ENCODE measurements at regions of chr10 and their contacts with region 1.

Region 1: GRCh38 chr10:128095027-128095752 is 31.0 kb downstream of the MKI67 start:
- DNase-seq: no peak
- ATAC-seq: no peak
- H3K4me3 ChIP-seq: no peak overlapping the region
- H3K27ac ChIP-seq: no peak overlapping the region
- H3K4me1 ChIP-seq: no peaks in the 10 kb centered on the region
- H3K27me3 ChIP-seq: peaks cover 0 to 5% (median 0%) of the 10 kb centered on the region in 9 donors
- CTCF ChIP-seq: no peak
- POLR2A ChIP-seq: no peak

Region 2: DNA sequence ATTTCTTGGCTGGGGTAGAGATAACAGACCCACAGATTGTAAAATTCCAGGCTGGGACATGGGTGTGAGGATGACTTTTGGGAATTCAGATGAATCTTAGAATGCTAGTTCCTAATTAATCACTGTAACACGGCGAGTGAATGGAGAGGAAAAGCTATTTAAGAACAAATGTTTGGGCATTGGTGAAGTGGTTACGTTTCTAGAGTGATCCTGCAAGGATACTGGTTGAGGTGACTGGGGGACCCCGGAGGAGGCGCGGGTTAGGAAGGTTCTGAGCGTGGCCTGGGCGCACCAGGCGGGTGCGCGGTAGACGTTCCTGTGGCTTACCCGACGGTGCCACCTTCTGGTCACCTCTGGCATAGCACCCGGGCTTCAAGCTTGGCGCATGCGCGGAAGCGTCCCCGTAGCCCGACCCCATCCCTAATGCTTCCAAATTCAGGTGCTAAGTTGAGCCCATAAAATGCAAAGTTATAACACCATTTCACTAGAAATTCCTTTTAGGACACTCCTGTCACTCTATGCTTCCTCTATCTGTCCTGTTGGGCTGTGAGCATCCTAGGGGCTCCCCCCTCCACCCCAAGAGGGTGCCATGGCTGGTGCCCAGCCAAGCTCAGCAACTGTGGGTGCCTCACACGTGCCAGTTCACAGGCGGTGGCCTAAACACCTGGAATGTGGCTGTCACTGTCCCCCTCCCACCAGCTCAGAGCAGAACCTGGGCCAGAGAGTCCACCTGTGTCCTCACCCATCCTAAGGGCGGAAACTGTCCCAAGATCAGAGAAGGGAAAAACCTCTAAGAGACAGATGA is 83.8 kb before region 1 on chr10:
- intact Hi-C with region 1: no loop called
- DNase-seq: peak; percentile 83 to 93 (median 86)
- ATAC-seq: peak; percentile 73 to 88 (median 86)
- H3K4me3 ChIP-seq: peak overlapping the region in 2 of 12 donors; percentile 1 to 2
- H3K27ac ChIP-seq: peak overlapping the region in 1 of 12 donors; percentile 39
- H3K4me1 ChIP-seq: peaks cover 0 to 31% (median 17%) of the 10 kb centered on the region in 12 donors
- H3K27me3 ChIP-seq: no peaks in the 10 kb centered on the region
- CTCF ChIP-seq: peak; percentile 98 to 100 (median 99)
- POLR2A ChIP-seq: no peak

Region 3: DNA sequence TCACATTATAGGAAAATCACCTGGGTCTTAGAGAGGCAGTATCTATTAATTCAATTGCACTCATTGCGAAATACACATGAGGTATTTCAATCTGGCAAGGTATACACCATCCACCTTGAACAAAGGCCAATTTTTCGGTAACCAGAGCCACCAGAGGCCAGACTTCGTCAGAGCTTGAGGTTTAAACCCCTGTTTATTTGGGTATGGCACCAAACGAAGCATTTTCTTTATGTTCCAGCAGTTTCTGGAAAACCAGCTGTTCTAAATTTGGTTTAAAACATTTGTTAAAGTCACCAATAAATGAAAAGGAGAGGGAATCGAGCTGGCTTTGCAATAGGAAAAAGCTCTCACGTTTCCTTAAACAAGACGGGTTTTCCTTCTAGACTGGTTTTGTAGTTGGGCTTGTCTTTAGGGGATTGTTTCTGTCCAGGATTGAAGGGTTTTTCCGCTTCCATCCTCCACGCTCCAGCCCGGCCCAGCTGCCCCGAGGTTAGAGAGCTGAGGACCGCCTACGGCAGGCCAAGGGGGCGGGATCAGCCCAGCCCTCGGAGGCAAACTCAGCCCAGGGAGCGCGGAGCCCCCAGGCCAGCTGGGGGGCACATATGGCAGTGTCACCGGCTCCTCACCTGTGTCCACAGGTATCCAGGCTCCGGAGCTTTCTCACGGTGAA is 832.4 kb after region 1 on chr10:
- intact Hi-C with region 1: loop called in 1 of 10 experiments (anchors 10 kb)
- DNase-seq: peak; percentile 63 to 81 (median 73)
- ATAC-seq: peak; percentile 54 to 85 (median 78)
- H3K4me3 ChIP-seq: peak overlapping the region in 1 of 12 donors; percentile 16
- H3K27ac ChIP-seq: peak overlapping the region in 11 of 12 donors; percentile 23 to 74 (median 58)
- H3K4me1 ChIP-seq: peaks cover 0 to 36% (median 10%) of the 10 kb centered on the region in 12 donors
- H3K27me3 ChIP-seq: peaks cover 0 to 8% (median 0%) of the 10 kb centered on the region in 9 donors
- CTCF ChIP-seq: no peak
- POLR2A ChIP-seq: no peak